Activated CD4-positive, alpha-beta T cell treated with anti-CD3 and anti-CD28 coated beads, Interleukin-2, amount 10 ng/mL, durations not matched to agents 24 days and 14 days (primary cell): ENCODE measurements at regions of chr3 and their contacts with region 1.

Region 1: GRCh38 chr3:3126477-3127431 is at the start of gene TRNT1:
- DNase-seq: peak; percentile 99
- H3K4me3 Mint-ChIP-seq: peak within 1 kb of the TSS; percentile 100
- H3K27ac Mint-ChIP-seq: peak within 1 kb of the TSS; percentile 99
- H3K4me1 Mint-ChIP-seq: peaks cover 24% of the 10 kb centered on the region
- H3K27me3 Mint-ChIP-seq: peaks cover 1% of the 10 kb centered on the region
- total RNA-seq, gene TRNT1: 55.7 and 62.4 TPM in 2 replicates

Region 2: GRCh38 chr3:3179407-3180094 is 52.8 kb after region 1 on chr3 and contains the start of gene CRBN:
- intact Hi-C with region 1: loop called (anchors 1 kb)
- DNase-seq: peak; percentile 97
- H3K4me3 Mint-ChIP-seq: peak within 1 kb of the TSS; percentile 97
- H3K27ac Mint-ChIP-seq: peak within 1 kb of the TSS; percentile 89
- H3K4me1 Mint-ChIP-seq: peaks cover 37% of the 10 kb centered on the region
- H3K27me3 Mint-ChIP-seq: peaks cover 8% of the 10 kb centered on the region
- total RNA-seq, gene CRBN: 37.0 and 40.0 TPM in 2 replicates